Spleen (tissue), 13 donors: ENCODE measurements at regions of chr17 and their contacts with region 1.

Region 1: GRCh38 chr17:49574323-49574781 is 1.3 kb upstream of the NXPH3 start:
- DNase-seq: no peak
- H3K4me3 ChIP-seq: no peak overlapping the region
- H3K27ac ChIP-seq: peak overlapping the region in 4 of 8 donors; percentile 36 to 59 (median 44)
- H3K4me1 ChIP-seq: peaks cover 13 to 49% (median 35%) of the 10 kb centered on the region in 6 donors
- H3K27me3 ChIP-seq: peaks cover 0 to 84% (median 29%) of the 10 kb centered on the region in 7 donors
- CTCF ChIP-seq: no peak
- POLR2A ChIP-seq: no peak

Region 2: GRCh38 chr17:49694847-49695683 is 120.7 kb after region 1 on chr17:
- intact Hi-C with region 1: loop called (anchors 5 kb)
- DNase-seq: peak; percentile 80
- H3K4me3 ChIP-seq: no peak overlapping the region
- H3K27ac ChIP-seq: no peak overlapping the region
- H3K4me1 ChIP-seq: peaks cover 0 to 37% (median 15%) of the 10 kb centered on the region in 6 donors
- H3K27me3 ChIP-seq: no peaks in the 10 kb centered on the region
- CTCF ChIP-seq: peak; percentile 84 to 96 (median 94)
- POLR2A ChIP-seq: no peak

Region 3: DNA sequence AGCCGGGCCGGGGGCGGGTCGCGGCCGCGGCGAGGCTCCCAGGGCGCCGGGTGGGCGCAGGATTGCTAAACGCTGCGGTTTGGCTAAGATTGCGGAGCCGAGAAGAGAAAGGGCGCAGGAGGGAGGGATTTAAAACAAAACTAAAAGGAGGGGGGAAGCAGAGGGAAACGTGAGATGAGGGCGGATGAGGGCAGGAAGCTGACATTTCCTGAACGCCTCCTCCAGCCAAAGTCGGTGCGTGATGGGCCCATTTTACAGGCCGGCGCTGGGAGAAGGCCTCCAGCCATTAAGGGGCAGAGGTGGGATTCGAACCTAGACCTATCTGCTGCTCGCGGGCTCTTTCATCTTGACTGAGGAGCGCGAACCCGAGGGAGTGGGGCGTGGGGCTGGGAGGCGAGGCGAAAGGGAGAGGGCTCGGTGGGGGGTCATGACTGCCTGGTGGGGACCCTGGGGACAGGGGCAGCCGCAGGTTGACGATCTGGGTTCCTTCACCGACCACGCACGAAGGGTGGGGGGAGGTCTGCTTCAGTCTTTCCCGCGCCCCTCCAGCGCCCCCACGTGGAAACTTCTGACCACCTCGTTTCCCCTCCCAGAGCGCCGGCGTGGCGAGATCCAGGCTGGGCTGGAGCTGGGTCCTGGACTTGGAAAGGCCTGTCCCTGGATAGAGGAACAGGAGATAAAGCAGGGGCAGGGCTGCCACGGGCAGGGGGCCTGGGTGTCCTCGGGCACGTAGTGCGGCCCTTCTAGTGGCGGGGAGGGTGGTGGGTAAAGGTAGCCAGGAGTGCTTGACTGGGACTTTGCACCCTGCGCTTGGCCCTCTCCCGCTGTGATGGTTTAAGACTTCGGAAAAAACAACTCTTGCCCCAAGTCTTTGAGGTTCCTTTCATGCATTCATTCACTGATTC is 277.3 kb after region 1 on chr17:
- intact Hi-C with region 1: loop called (anchors 5 kb)
- DNase-seq: peak; percentile 91
- H3K4me3 ChIP-seq: peak overlapping the region; percentile 45 to 75 (median 54)
- H3K27ac ChIP-seq: peak overlapping the region; percentile 35 to 74 (median 56)
- H3K4me1 ChIP-seq: peaks cover 8 to 32% (median 16%) of the 10 kb centered on the region in 6 donors
- H3K27me3 ChIP-seq: peaks cover 0 to 16% (median 0%) of the 10 kb centered on the region in 7 donors
- CTCF ChIP-seq: peak; percentile 41 to 84 (median 71)
- POLR2A ChIP-seq: no peak